ENCODE measurements at regions of chr1 and their contacts with region 1.

Region 1: DNA sequence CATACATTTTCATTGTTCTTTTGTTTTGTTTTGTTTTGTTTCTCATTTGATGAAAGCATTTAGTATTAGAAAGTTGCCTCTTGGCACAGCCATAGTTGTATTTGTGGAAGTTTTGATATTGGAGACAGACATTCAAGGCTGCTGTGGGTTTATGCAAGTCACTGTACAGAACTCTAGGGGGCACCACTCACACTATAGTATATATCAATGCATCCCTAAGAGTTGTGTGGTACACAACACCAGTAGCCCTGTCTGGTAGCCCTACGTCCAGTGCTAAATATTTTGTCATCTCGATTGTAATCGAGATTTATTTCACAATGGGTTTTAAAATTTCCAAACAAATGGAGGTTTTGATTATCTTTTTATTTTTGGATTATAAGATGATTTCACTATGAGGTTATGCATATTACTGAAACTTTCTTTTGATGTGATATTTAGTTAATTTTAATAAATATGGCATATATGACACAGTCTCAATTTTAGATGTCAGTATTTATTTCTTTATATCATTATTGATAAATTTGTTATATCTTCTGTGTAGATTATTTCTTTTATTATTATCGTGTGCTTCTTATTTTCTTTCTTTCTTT is 112.2 kb downstream of the NR5A2 start:
- DNase-seq: no peak
- ATAC-seq: peak; percentile 78
- H3K4me3 Mint-ChIP-seq: no peak overlapping the region
- H3K27ac Mint-ChIP-seq: no peak overlapping the region
- H3K4me1 Mint-ChIP-seq: no peaks in the 10 kb centered on the region
- H3K27me3 Mint-ChIP-seq: no peaks in the 10 kb centered on the region
- CTCF ChIP-seq: no peak

Region 2: GRCh38 chr1:199684686-199685273 is 455.0 kb before region 1 on chr1:
- CTCF ChIA-PET with region 1: interaction called, 6 read pairs
- POLR2A ChIA-PET with region 1: no interaction called
- intact Hi-C with region 1: loop called (anchors 1 kb)
- DNase-seq: no peak
- ATAC-seq: peak; percentile 71
- H3K4me3 Mint-ChIP-seq: no peak overlapping the region
- H3K27ac Mint-ChIP-seq: no peak overlapping the region
- H3K4me1 Mint-ChIP-seq: no peaks in the 10 kb centered on the region
- H3K27me3 Mint-ChIP-seq: peaks cover 6% of the 10 kb centered on the region
- CTCF ChIP-seq: peak; percentile 61

Region 3: DNA sequence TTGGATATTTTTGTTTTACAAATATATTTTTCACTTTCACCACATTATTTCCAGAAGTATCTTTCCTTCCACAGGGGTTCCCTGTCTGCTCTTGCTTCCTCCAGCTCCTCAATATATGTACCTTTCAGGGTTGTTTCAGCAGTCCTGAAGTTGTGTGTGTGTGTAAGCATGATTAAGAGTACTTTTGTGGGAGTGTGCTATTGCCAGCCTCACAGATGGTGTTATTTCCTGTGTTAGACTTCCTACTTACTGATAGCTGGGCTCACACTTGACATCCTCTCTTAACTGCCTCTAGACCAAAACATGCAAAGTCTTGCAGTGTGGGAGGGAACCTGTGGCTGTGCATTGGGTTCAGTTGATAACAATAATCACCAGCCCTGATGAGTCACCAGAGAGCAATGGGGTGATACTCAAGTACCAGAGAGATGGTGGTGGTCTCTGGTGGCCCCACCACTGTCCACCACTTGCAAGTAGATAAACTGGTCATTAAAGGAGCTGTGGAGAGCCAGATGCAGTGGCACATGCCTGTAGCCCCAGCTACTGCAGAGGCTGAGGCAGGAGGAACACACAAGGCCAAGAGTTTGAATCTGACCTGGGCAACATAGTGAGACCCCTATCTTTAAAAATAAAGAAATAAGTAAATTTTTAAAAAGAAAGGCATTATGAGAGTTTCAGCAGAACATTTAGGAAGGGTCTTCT is 14.5 kb after region 1 on chr1:
- CTCF ChIA-PET with region 1: interaction called, 9 read pairs
- POLR2A ChIA-PET with region 1: interaction called, 5 read pairs
- intact Hi-C with region 1: loop called (anchors 2 kb)
- DNase-seq: peak; percentile 23
- ATAC-seq: peak; percentile 87
- H3K4me3 Mint-ChIP-seq: peak overlapping the region; percentile 61
- H3K27ac Mint-ChIP-seq: peak overlapping the region; percentile 92
- H3K4me1 Mint-ChIP-seq: peaks cover 55% of the 10 kb centered on the region
- H3K27me3 Mint-ChIP-seq: no peaks in the 10 kb centered on the region
- CTCF ChIP-seq: no peak

Region 4: DNA sequence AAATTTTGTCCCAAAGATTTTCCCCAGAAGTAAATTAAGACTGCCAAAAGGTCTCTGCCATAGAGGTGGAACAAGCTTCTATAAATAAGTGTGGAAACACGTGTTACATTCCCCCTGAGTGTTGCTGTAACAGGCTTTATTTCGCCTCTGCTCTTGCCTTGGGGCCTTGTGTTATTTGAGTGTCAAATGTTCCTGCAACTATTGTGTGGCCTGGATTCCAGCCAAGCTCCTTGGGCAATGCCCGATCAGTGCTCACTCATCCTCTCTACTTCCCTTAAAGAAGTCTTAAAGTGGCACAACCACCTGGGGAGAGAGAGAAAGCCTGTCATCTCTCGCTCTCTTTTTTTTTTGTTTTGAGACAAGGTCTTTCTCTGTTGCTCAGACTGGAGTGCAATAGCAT is 44.4 kb after region 1 on chr1:
- CTCF ChIA-PET with region 1: no interaction called
- POLR2A ChIA-PET with region 1: no interaction called
- intact Hi-C with region 1: loop called (anchors 5 kb)
- DNase-seq: no peak
- ATAC-seq: no peak
- H3K4me3 Mint-ChIP-seq: no peak overlapping the region
- H3K27ac Mint-ChIP-seq: no peak overlapping the region
- H3K4me1 Mint-ChIP-seq: peaks cover 21% of the 10 kb centered on the region
- H3K27me3 Mint-ChIP-seq: peaks cover 10% of the 10 kb centered on the region
- CTCF ChIP-seq: no peak

Region 5: DNA sequence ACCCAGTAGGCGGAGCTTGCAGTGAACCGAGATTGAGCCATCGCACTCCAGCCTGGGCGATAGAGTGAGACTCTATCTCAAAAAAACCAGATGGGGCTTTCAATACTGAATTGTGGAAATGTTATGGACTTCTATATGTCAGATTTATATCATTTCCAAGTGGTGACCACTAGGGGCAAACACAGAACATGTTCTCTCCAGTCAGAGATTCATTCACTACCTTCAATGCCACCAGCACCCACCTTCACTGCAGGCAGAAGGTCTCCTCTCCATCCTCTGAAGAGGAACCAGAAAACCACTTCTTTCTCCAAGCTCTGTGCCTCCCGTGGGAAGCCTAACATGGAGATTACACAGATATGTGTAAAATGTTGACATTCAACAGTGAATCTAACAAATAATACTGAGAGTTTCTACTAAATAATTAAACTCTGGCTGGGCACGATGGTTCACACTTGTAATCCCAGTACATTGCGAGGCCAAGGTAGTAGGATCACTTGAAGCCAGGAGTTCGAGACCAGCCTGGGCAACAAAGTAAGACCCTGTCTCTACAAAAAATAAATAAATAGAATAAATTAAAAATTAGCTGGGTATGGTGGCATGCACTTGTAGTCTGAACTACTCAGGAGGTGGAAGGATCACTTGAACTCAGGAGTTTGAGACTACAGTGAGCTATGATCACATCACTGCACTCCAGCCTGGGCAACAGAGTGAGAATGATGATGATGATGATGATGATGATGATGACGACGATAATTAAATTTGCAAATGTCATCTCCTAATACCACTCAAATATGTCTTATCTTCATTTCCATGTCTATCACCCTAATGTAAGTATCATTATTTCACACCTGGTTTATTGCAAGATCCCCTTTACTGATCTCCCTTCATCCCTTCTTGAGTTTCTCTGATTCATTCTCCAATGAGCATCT is 119.0 kb after region 1 on chr1:
- CTCF ChIA-PET with region 1: interaction called, 3 read pairs
- POLR2A ChIA-PET with region 1: no interaction called
- intact Hi-C with region 1: loop called (anchors 1 kb)
- DNase-seq: no peak
- ATAC-seq: peak; percentile 82
- H3K4me3 Mint-ChIP-seq: no peak overlapping the region
- H3K27ac Mint-ChIP-seq: no peak overlapping the region
- H3K4me1 Mint-ChIP-seq: peaks cover 7% of the 10 kb centered on the region
- H3K27me3 Mint-ChIP-seq: no peaks in the 10 kb centered on the region
- CTCF ChIP-seq: peak; percentile 45

Region 6: GRCh38 chr1:200510228-200510623 is 370.5 kb after region 1 on chr1:
- CTCF ChIA-PET with region 1: interaction called, 4 read pairs
- POLR2A ChIA-PET with region 1: no interaction called
- intact Hi-C with region 1: loop called (anchors 1 kb)
- DNase-seq: no peak
- ATAC-seq: peak; percentile 78
- H3K4me3 Mint-ChIP-seq: no peak overlapping the region
- H3K27ac Mint-ChIP-seq: no peak overlapping the region
- H3K4me1 Mint-ChIP-seq: no peaks in the 10 kb centered on the region
- H3K27me3 Mint-ChIP-seq: peaks cover 17% of the 10 kb centered on the region
- CTCF ChIP-seq: peak; percentile 89